Adrenal gland (tissue), 19 donors: ENCODE measurements at regions of chr4 and their contacts with region 1.

Region 1: GRCh38 chr4:82428969-82429727 is 1.1 kb downstream of the HNRNPDL start:
- DNase-seq: peak; percentile 90 to 96 (median 93)
- H3K4me3 ChIP-seq: peak overlapping the region; percentile 82 to 95 (median 92)
- H3K27ac ChIP-seq: peak overlapping the region; percentile 78 to 98 (median 97)
- H3K4me1 ChIP-seq: peaks cover 20 to 36% of the 10 kb centered on the region in 2 donors
- H3K27me3 ChIP-seq: no peaks in the 10 kb centered on the region
- CTCF ChIP-seq: peak; percentile 61 to 99 (median 81)
- POLR2A ChIP-seq: peak; percentile 70 to 83

Region 2: DNA sequence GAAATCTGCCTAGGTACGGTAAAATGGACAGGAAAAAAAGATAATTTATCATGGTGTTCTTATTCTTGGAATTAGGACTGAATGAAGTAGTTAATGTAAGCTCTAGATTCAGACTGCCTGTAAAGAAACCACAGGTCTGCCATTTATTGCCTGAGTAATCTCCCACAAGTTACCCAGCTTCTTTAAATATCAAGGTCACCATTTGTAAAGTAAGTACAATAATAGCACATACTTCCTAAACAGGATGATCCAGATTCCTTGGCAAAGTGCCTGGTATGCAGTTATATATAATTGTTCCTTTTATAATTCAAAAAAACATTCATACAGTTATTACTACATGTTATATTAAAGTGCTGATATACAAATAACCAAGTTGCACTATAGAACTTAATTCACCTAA is 424.0 kb before region 1 on chr4:
- intact Hi-C with region 1: no loop called
- DNase-seq: no peak
- H3K4me3 ChIP-seq: no peak overlapping the region
- H3K27ac ChIP-seq: no peak overlapping the region
- H3K4me1 ChIP-seq: no peaks in the 10 kb centered on the region
- H3K27me3 ChIP-seq: no peaks in the 10 kb centered on the region
- CTCF ChIP-seq: no peak
- POLR2A ChIP-seq: no peak

Region 3: GRCh38 chr4:82373816-82374625 is 55.1 kb before region 1 on chr4 and contains the start of gene HNRNPD:
- intact Hi-C with region 1: loop called (anchors 5 kb)
- DNase-seq: peak; percentile 97 to 99 (median 98)
- H3K4me3 ChIP-seq: peak within 1 kb of the TSS; percentile 33 to 86 (median 82)
- H3K27ac ChIP-seq: peak within 1 kb of the TSS; percentile 93 to 100 (median 99)
- H3K4me1 ChIP-seq: peaks cover 23 to 46% of the 10 kb centered on the region in 2 donors
- H3K27me3 ChIP-seq: no peaks in the 10 kb centered on the region
- CTCF ChIP-seq: peak in 1 of 6 experiments; percentile 5
- POLR2A ChIP-seq: peak; percentile 92 to 98
- total RNA-seq, gene HNRNPD: 32.2 to 158 (median 64.3) TPM